CD8-positive, alpha-beta T cell (primary cell): ENCODE measurements at regions of chr6 and their contacts with region 1.

Region 1: DNA sequence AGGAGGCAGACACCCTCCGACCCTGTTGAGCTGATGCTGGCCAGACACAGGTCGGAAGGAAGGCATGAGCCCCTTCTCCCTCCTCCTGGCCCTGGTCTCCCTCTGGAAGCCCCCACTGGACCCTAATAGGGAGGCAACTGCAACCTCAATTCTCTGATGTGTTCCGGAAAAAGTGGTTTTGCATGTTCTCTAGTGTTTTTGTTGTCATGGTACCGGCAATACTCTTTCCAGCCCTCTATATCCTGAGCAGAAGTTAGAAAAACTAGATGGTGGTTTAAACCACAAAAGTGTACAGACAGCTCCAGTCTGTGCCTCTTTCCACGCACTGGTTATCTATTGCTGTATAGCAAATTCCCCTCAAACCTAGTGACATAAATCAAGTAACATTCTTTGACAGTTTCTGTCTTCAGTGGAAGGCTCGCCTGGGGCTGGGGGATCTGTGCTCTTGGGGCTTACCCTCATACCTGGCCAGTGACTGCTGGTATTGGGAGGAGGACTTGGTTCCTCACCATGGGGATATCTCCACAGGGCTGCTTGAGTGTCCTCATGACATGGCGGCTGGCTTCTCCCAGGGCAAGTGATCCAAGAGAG is 37.0 kb downstream of the SYTL3 start:
- DNase-seq: peak in 8 of 9 experiments; percentile 29 to 94 (median 60)
- ATAC-seq: peak; percentile 88
- H3K4me3 ChIP-seq: peak overlapping the region; percentile 6 to 21
- H3K4me3 Mint-ChIP-seq: peak overlapping the region; percentile 73
- H3K27ac ChIP-seq: peak overlapping the region; percentile 75 to 79
- H3K27ac Mint-ChIP-seq: peak overlapping the region; percentile 97
- H3K4me1 ChIP-seq: peaks cover 48% of the 10 kb centered on the region
- H3K4me1 Mint-ChIP-seq: peaks cover 62% of the 10 kb centered on the region
- H3K27me3 ChIP-seq: no peaks in the 10 kb centered on the region
- H3K27me3 Mint-ChIP-seq: no peaks in the 10 kb centered on the region
- CTCF ChIP-seq: no peak

Region 2: DNA sequence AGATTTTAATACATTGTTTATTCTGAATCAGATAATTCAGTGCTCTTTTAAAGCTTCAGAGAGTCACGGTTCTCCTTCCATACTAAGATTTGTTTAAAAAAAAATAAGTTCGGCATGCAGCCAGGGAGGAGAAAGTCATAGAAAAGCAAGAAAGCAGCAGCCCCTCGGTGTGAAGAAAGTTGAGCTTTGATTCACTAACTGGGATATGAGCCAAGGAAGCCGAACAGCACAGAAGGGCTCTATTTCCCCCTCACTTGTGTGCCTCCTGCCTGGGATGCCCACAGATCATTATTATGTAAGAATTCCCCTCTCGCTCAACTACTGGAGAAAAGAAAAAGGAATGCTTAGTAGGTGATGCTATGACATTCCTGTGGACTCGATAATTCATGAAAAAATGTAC is 774.6 kb before region 1 on chr6:
- CTCF ChIA-PET with region 1: no interaction called
- POLR2A ChIA-PET with region 1: no interaction called
- intact Hi-C with region 1: no loop called
- DNase-seq: no peak
- ATAC-seq: no peak
- H3K4me3 ChIP-seq: no peak overlapping the region
- H3K4me3 Mint-ChIP-seq: no peak overlapping the region
- H3K27ac ChIP-seq: no peak overlapping the region
- H3K27ac Mint-ChIP-seq: no peak overlapping the region
- H3K4me1 ChIP-seq: no peaks in the 10 kb centered on the region
- H3K4me1 Mint-ChIP-seq: peaks cover 8% of the 10 kb centered on the region
- H3K27me3 ChIP-seq: no peaks in the 10 kb centered on the region
- H3K27me3 Mint-ChIP-seq: no peaks in the 10 kb centered on the region
- CTCF ChIP-seq: no peak

Region 3: DNA sequence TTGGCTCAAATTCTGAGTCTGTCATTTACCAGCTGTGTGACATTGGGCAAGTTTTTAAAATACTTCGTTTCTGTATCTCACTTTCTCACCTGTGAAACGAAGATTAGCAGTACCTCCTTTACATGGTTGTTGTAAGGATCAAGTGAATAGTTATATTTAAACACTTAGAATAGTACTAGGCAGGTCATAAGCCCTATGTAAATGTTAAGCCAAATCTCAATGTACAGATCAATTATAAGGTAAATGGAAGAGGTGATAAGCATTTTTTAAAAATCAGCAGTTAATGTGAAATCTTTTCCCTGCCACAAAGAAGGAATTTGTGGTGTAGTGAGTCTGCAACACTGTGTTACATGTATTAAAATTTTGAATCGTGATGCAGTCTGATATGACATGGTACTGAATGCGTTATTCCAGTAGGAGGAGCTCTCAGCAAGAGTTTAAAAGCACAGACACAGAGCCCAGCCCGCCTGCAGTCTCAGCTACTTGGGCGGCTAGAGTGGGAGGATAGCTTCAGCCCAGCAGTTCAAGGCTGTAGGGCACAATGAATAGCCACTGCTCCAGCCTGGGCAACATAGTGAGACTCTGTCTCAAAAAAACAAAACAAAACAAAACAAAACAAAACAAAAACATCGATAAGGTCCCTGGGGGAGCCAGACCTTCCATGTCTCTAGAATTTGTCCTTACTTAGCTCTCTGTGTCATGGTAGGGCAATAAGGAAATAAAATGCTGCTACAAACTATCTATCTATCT is 472.8 kb before region 1 on chr6:
- CTCF ChIA-PET with region 1: interaction called, 9 read pairs
- POLR2A ChIA-PET with region 1: no interaction called
- intact Hi-C with region 1: loop called in 1 of 2 experiments (anchors 1 kb)
- DNase-seq: peak; percentile 9 to 77 (median 46)
- ATAC-seq: peak; percentile 99
- H3K4me3 ChIP-seq: no peak overlapping the region
- H3K4me3 Mint-ChIP-seq: no peak overlapping the region
- H3K27ac ChIP-seq: no peak overlapping the region
- H3K27ac Mint-ChIP-seq: no peak overlapping the region
- H3K4me1 ChIP-seq: no peaks in the 10 kb centered on the region
- H3K4me1 Mint-ChIP-seq: no peaks in the 10 kb centered on the region
- H3K27me3 ChIP-seq: no peaks in the 10 kb centered on the region
- H3K27me3 Mint-ChIP-seq: no peaks in the 10 kb centered on the region
- CTCF ChIP-seq: peak; percentile 84

Region 4: GRCh38 chr6:158605266-158605878 is 81.5 kb before region 1 on chr6:
- CTCF ChIA-PET with region 1: interaction called, 11 read pairs
- POLR2A ChIA-PET with region 1: no interaction called
- intact Hi-C with region 1: no loop called
- DNase-seq: peak; percentile 14 to 71 (median 52)
- ATAC-seq: peak; percentile 87
- H3K4me3 ChIP-seq: no peak overlapping the region
- H3K4me3 Mint-ChIP-seq: no peak overlapping the region
- H3K27ac ChIP-seq: peak overlapping the region in 1 of 2 experiments; percentile 1
- H3K27ac Mint-ChIP-seq: no peak overlapping the region
- H3K4me1 ChIP-seq: no peaks in the 10 kb centered on the region
- H3K4me1 Mint-ChIP-seq: peaks cover 2% of the 10 kb centered on the region
- H3K27me3 ChIP-seq: no peaks in the 10 kb centered on the region
- H3K27me3 Mint-ChIP-seq: no peaks in the 10 kb centered on the region
- CTCF ChIP-seq: peak; percentile 69

Region 5: GRCh38 chr6:158639056-158639455 is 47.8 kb before region 1 on chr6:
- CTCF ChIA-PET with region 1: interaction called, 57 read pairs
- POLR2A ChIA-PET with region 1: interaction called, 5 read pairs
- intact Hi-C with region 1: no loop called
- DNase-seq: no peak
- ATAC-seq: no peak
- H3K4me3 ChIP-seq: no peak overlapping the region
- H3K4me3 Mint-ChIP-seq: no peak overlapping the region
- H3K27ac ChIP-seq: peak overlapping the region in 1 of 2 experiments; percentile 42
- H3K27ac Mint-ChIP-seq: peak overlapping the region; percentile 74
- H3K4me1 ChIP-seq: peaks cover 55% of the 10 kb centered on the region
- H3K4me1 Mint-ChIP-seq: peaks cover 79% of the 10 kb centered on the region
- H3K27me3 ChIP-seq: no peaks in the 10 kb centered on the region
- H3K27me3 Mint-ChIP-seq: no peaks in the 10 kb centered on the region
- CTCF ChIP-seq: no peak

Region 6: DNA sequence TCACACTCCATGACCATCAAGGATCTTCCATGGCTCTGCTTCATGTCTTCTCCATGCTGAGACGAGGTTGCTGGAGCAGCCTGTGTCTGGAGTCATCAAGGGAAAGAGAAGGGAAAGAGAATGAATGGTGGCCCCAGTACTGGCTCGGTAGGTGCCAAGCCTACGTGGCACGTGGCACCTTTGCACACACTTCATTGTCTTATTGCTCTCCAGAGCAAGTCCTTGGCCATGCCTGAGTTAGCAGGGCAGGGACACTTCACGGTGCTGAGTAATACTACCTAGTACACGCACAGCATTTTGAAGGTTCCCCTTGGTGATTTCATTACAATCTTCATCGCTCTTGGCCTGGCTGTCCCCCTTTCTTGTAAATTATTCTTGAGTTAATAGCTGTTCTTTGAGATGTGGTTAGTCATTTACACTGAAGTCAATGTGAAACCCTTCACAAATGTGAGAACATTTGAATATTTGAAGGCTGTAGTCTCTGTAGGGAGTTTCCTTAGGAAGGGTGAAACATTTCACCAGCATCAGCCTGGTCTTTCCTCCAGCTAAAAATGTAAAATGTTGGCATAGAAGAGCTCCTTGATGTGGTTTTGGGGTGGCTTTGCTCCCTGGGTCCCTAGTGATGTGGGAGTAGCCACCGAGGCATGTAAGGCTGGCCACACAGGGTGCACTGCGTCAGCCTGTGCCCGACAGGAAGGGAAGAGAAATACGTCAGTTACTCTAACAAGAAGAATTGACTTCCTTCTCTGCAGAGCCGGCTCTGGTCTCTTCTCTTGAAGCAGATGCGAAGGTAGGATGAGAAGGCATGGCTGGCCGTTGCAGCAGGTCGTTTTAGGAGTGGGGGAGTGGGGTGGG is 37.4 kb before region 1 on chr6 and contains the start of gene SYTL3:
- CTCF ChIA-PET with region 1: interaction called, 57 read pairs
- POLR2A ChIA-PET with region 1: interaction called, 14 read pairs
- intact Hi-C with region 1: loop called (anchors 1 to 5 kb)
- DNase-seq: peak; percentile 50 to 97 (median 76)
- ATAC-seq: peak; percentile 61
- H3K4me3 ChIP-seq: peak within 1 kb of the TSS in 1 of 2 experiments; percentile 43
- H3K4me3 Mint-ChIP-seq: peak within 1 kb of the TSS; percentile 77
- H3K27ac ChIP-seq: peak within 1 kb of the TSS; percentile 53 to 76
- H3K27ac Mint-ChIP-seq: peak within 1 kb of the TSS; percentile 85
- H3K4me1 ChIP-seq: peaks cover 51% of the 10 kb centered on the region
- H3K4me1 Mint-ChIP-seq: peaks cover 64% of the 10 kb centered on the region
- H3K27me3 ChIP-seq: no peaks in the 10 kb centered on the region
- H3K27me3 Mint-ChIP-seq: no peaks in the 10 kb centered on the region
- CTCF ChIP-seq: no peak
- total RNA-seq, gene SYTL3: 38.2 to 44.6 TPM

Region 7: DNA sequence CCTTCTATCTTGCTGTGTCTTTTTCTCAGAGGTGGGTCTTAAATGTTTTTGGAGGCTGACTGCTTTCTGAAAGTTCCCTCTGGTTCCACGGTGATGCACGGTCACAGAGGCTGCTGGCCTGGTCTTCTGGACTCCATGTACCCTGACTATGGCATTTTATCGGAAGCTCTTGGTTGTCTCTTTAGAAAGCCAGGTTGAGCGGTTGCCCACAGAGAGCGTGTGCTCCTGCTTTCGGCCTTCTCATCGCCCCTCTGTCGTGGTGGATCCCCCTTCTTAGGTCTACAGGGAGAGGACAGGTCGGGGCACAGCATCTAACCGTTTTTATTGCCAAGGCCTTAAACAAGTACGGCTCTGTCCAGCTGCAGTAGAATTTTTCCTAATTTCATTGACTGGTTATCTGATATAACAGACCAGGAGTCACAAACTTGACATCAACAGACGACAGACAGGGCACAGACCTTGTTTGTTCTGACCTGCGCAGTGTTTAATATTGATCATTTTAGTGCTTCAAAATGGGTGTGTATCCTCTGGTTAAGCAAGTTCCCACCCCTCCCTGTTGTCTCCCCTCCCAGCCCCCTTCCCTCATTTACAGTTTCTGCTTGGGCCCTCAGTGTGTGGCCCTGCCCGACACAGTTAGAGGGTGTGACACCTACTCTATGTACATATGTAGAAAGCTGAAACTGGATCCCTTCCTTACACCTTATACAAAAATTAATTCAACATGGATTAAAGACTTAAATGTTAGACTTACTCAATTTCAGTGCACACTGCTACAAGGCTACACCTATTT is 12.3 kb before region 1 on chr6:
- CTCF ChIA-PET with region 1: interaction called, 22 read pairs
- POLR2A ChIA-PET with region 1: no interaction called
- intact Hi-C with region 1: no loop called
- DNase-seq: peak in 1 of 9 experiments; percentile 29
- ATAC-seq: no peak
- H3K4me3 ChIP-seq: no peak overlapping the region
- H3K4me3 Mint-ChIP-seq: no peak overlapping the region
- H3K27ac ChIP-seq: no peak overlapping the region
- H3K27ac Mint-ChIP-seq: no peak overlapping the region
- H3K4me1 ChIP-seq: no peaks in the 10 kb centered on the region
- H3K4me1 Mint-ChIP-seq: peaks cover 8% of the 10 kb centered on the region
- H3K27me3 ChIP-seq: no peaks in the 10 kb centered on the region
- H3K27me3 Mint-ChIP-seq: no peaks in the 10 kb centered on the region
- CTCF ChIP-seq: no peak